ENCODE measurements at regions of chr10 and their contacts with region 1.

Region 1: GRCh38 chr10:133278577-133279265 is 2.1 kb upstream of the ADAM8 start:
- DNase-seq: peak; percentile 73
- H3K4me3 ChIP-seq: no peak overlapping the region
- H3K27ac ChIP-seq: peak overlapping the region; percentile 53
- H3K4me1 ChIP-seq: peaks cover 47% of the 10 kb centered on the region
- CTCF ChIP-seq: no peak

Region 2: DNA sequence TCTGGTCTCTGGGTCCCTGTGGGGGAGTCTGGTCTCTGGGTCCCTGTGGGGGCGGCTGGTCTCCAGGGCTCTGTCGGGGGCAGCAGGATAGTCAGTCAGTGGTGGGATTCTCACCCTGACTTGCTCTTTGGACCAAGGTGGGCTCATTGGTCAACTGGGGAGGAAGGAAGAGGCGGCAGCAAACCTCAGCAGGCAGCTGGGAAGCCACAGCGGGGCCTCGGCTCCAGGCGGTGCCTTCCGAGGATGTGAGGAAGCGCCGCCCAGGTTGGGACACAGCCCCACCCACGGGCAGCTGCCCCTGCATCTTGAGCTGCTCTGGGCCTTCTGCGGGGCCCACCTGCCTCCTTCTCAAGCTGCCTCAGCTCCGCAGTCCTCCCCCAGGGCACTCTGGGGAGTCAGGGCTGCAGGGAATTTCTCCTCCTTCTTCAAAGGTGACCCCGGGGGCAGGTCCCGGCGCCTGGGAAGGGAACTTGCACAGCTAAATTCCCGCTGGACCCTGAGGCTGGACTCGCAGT is 139.1 kb before region 1 on chr10:
- CTCF ChIA-PET with region 1: no interaction called
- POLR2A ChIA-PET with region 1: no interaction called
- intact Hi-C with region 1: loop called (anchors 5 kb)
- DNase-seq: no peak
- H3K4me3 ChIP-seq: no peak overlapping the region
- H3K27ac ChIP-seq: no peak overlapping the region
- H3K4me1 ChIP-seq: peaks cover 7% of the 10 kb centered on the region
- CTCF ChIP-seq: no peak

Region 3: GRCh38 chr10:133373104-133373624 is 94.4 kb after region 1 on chr10 and contains the start of gene ECHS1:
- CTCF ChIA-PET with region 1: no interaction called
- POLR2A ChIA-PET with region 1: no interaction called
- intact Hi-C with region 1: no loop called
- DNase-seq: peak; percentile 94
- H3K4me3 ChIP-seq: peak within 1 kb of the TSS; percentile 85
- H3K27ac ChIP-seq: peak within 1 kb of the TSS; percentile 12
- H3K4me1 ChIP-seq: peaks cover 27% of the 10 kb centered on the region
- CTCF ChIP-seq: no peak
- total RNA-seq, gene ECHS1: 39.5 and 48.3 TPM in 2 replicates

Region 4: GRCh38 chr10:133590226-133590969 is 311.7 kb after region 1 on chr10:
- CTCF ChIA-PET with region 1: no interaction called
- POLR2A ChIA-PET with region 1: no interaction called
- intact Hi-C with region 1: no loop called
- DNase-seq: no peak
- H3K4me3 ChIP-seq: no peak overlapping the region
- H3K27ac ChIP-seq: no peak overlapping the region
- H3K4me1 ChIP-seq: no peaks in the 10 kb centered on the region
- CTCF ChIP-seq: no peak